ENCODE measurements at regions of chr6 and their contacts with region 1.

Region 1: DNA sequence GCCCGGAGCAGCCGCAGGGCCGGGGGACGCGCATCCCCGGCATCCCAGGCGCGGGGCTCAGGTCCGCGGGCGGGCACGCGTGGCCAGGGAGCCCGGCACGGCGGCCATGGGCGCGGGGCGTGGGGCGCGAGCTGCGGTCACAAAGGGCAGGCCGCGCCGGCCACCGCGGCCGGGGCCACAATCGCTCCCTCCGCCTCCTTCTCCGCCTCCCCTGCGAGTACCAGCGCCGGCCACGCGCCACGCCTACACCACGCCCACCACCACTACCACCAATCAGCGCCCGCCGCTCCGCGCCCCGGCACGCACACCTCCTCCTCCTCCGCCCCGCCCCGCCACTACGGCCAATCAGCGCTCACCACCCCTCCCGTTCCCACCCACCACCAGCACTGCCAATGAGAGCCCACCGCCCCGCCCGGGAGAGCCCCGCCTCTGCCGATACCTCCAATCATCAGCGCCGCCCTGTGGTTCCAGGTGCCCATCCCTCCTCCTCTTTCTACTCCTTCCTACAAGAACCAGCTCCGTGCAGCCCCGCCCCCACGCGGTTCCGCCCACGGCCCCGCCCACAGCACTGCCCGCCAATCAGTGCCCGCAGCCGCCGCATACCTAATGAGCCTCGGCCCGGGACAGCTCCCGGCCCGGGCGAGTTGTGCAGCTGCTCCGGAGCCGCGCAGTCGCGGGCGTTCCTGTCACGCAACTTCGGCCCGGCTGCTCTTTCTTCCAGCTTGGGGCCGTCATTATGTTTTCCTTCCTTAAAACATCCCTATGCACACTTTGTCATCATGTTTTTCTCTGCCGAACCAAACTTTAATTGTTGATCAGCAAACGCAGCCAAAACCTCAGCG is at the start of gene RPS6KA2:
- DNase-seq: peak; percentile 99 to 100 (median 100)
- H3K4me3 ChIP-seq: peak within 1 kb of the TSS; percentile 55 to 79 (median 62)
- H3K4me3 Mint-ChIP-seq: peak within 1 kb of the TSS; percentile 91 to 93
- H3K27ac ChIP-seq: peak within 1 kb of the TSS; percentile 52 to 81
- H3K27ac Mint-ChIP-seq: peak within 1 kb of the TSS; percentile 73 to 93 (median 86)
- H3K4me1 ChIP-seq: peaks cover 21 to 29% of the 10 kb centered on the region in 2 donors
- H3K4me1 Mint-ChIP-seq: peaks cover 25% of the 10 kb centered on the region
- H3K27me3 ChIP-seq: peaks cover 27 to 36% of the 10 kb centered on the region in 2 donors
- H3K27me3 Mint-ChIP-seq: peaks cover 42 to 48% (median 48%) of the 10 kb centered on the region in 3 donors
- CTCF ChIP-seq: no peak
- polyA plus RNA-seq, gene RPS6KA2: 1.4 to 3.1 (median 1.9) TPM

Region 2: DNA sequence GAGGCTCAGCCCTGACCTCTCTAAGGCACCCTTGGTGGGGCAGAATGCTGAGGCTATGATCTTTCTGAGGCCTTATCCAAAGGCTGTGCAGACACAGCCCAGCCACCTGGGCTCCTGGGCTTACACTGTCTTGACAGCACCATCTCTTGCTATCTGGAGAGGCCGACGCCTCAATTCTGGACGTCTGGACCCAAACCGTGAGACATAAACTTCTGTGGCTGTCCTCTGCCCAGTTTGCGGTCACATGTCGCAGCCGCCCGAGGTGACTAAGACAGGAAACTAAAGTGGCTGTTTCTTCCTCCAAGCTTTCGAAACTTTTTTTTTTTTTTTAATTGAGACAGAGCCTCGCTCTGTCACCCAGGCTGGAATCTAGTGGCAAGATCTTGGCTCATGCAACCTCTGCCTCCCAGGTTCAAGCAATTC is 368.4 kb before region 1 on chr6:
- intact Hi-C with region 1: loop called (anchors 10 kb)
- DNase-seq: peak; percentile 94 to 97 (median 95)
- H3K4me3 ChIP-seq: peak overlapping the region in 1 of 3 experiments; percentile 49
- H3K4me3 Mint-ChIP-seq: peak overlapping the region; percentile 66 to 80
- H3K27ac ChIP-seq: peak overlapping the region; percentile 95 to 99
- H3K27ac Mint-ChIP-seq: peak overlapping the region; percentile 99 to 100 (median 99)
- H3K4me1 ChIP-seq: peaks cover 39 to 47% of the 10 kb centered on the region in 2 donors
- H3K4me1 Mint-ChIP-seq: peaks cover 58% of the 10 kb centered on the region
- H3K27me3 ChIP-seq: no peaks in the 10 kb centered on the region
- H3K27me3 Mint-ChIP-seq: peaks cover 8 to 15% (median 10%) of the 10 kb centered on the region in 3 donors
- CTCF ChIP-seq: no peak

Region 3: DNA sequence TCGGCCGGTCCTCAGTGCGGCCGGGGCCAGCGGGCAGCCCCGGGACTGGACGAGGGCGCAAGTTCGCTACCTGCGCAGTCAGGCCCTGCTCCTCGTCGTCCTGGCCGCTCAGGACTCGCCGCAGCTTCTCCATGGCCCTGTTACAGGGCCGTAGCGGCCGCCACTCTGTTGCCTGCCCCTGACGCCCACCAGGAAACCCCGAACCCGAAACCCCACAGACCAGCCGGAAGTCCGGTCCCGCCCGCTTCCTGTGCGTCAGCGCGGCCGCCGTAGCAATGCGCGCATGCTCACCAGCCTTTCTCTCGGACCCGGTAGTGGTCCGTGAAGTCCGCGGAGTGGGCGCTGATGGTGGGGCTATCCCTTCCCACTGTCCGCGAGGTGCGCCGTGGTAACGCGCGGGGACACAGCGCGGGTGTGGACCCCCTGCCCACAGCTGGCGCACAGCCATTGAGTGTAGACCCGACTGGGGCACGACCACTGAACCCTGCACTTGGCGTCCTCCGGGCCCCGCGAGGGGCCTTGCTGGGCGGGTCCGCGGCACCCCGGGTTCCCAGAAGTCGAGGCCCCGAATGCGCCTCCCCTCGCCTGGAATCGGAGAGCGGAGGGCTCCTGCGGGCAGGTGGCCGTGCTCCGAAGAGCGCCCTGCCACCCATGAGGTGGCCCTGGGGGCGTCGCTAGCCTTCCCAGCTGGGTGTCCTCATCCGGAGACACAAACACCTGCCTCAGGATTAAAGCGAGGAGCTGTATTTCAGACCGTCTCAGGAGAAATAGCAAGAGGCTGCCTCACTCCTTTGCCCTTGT is 284.7 kb before region 1 on chr6 and contains the start of gene SFT2D1:
- intact Hi-C with region 1: loop called in 1 of 2 experiments (anchors 5 kb)
- DNase-seq: peak; percentile 90 to 95 (median 92)
- H3K4me3 ChIP-seq: peak within 1 kb of the TSS; percentile 67 to 97 (median 88)
- H3K4me3 Mint-ChIP-seq: peak within 1 kb of the TSS; percentile 93 to 98
- H3K27ac ChIP-seq: peak within 1 kb of the TSS; percentile 94 to 100
- H3K27ac Mint-ChIP-seq: peak within 1 kb of the TSS; percentile 96 to 98 (median 97)
- H3K4me1 ChIP-seq: peaks cover 36 to 40% of the 10 kb centered on the region in 2 donors
- H3K4me1 Mint-ChIP-seq: peaks cover 22% of the 10 kb centered on the region
- H3K27me3 ChIP-seq: no peaks in the 10 kb centered on the region
- H3K27me3 Mint-ChIP-seq: peaks cover 0 to 1% (median 0%) of the 10 kb centered on the region in 3 donors
- CTCF ChIP-seq: no peak
- polyA plus RNA-seq, gene SFT2D1: 48.1 to 166 (median 140) TPM

Region 4: DNA sequence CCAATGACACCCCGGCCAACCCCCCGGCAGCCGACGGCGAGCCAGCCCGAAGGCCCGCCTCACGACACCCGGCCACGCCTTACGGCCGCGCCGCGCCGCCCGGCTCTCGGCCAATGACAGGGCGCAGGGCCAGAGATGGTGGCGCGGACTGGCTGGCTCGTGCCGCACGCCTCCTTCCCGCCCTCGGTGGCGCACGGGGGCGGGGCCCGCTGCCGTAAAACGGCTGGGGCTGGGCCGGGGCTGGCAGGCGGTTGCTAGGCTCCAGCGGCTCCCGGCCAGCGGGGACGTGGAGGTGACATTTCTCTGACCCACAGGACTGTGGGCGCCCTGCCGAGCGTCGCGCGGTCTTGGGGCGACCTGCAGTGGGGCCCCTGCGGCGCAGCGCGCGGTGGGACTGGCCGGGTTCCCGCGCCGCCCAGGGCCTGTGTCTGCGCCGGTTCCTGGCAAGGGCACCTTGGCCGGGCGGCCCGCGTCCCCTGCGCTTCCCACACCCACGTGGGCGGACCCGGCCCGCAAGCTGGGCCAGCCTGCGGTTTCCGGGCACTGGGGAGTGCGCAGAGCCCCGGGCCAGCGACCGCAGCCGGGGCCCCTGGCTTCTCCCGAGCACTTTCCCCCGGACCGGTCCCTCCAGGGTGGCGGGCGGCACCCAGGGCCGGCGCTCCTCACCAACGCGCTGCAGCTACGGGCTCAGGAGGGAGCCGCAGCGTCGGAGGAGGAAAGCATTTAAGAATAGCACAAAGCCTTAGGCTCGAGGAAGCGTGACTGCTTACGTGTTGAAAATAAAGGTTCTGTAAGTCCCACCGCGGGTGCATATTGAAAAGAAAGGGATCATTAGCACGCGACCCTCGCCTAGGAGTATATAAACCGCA is 244.1 kb before region 1 on chr6 and contains the start of gene MPC1:
- intact Hi-C with region 1: loop called (anchors 5 to 10 kb)
- DNase-seq: peak; percentile 91 to 93 (median 92)
- H3K4me3 ChIP-seq: peak within 1 kb of the TSS; percentile 89 to 97 (median 92)
- H3K4me3 Mint-ChIP-seq: peak within 1 kb of the TSS; percentile 94 to 95
- H3K27ac ChIP-seq: peak within 1 kb of the TSS; percentile 81 to 86
- H3K27ac Mint-ChIP-seq: peak within 1 kb of the TSS; percentile 88 to 95 (median 90)
- H3K4me1 ChIP-seq: peaks cover 14 to 25% of the 10 kb centered on the region in 2 donors
- H3K4me1 Mint-ChIP-seq: peaks cover 23% of the 10 kb centered on the region
- H3K27me3 ChIP-seq: no peaks in the 10 kb centered on the region
- H3K27me3 Mint-ChIP-seq: no peaks in the 10 kb centered on the region
- CTCF ChIP-seq: peak; percentile 44
- polyA plus RNA-seq, gene MPC1: 52.4 to 122 (median 104) TPM

Region 5: GRCh38 chr6:166956444-166957086 is 329.3 kb after region 1 on chr6 and contains the start of gene RNASET2:
- intact Hi-C with region 1: loop called (anchors 5 to 10 kb)
- DNase-seq: peak; percentile 88 to 93 (median 91)
- H3K4me3 ChIP-seq: peak within 1 kb of the TSS; percentile 85 to 97 (median 95)
- H3K4me3 Mint-ChIP-seq: peak within 1 kb of the TSS; percentile 93 to 97
- H3K27ac ChIP-seq: peak within 1 kb of the TSS; percentile 99 to 100
- H3K27ac Mint-ChIP-seq: peak within 1 kb of the TSS; percentile 98 to 100 (median 100)
- H3K4me1 ChIP-seq: peaks cover 70 to 80% of the 10 kb centered on the region in 2 donors
- H3K4me1 Mint-ChIP-seq: peaks cover 69% of the 10 kb centered on the region
- H3K27me3 ChIP-seq: no peaks in the 10 kb centered on the region
- H3K27me3 Mint-ChIP-seq: peaks cover 0 to 8% (median 3%) of the 10 kb centered on the region in 3 donors
- CTCF ChIP-seq: no peak
- polyA plus RNA-seq, gene RNASET2: 432 to 562 (median 493) TPM

Region 6: GRCh38 chr6:166999145-166999883 is 372.1 kb after region 1 on chr6 and contains the start of gene CEP43:
- intact Hi-C with region 1: loop called in 1 of 2 experiments (anchors 5 kb)
- DNase-seq: peak; percentile 93 to 95 (median 94)
- H3K4me3 ChIP-seq: peak within 1 kb of the TSS; percentile 76 to 99 (median 98)
- H3K4me3 Mint-ChIP-seq: peak within 1 kb of the TSS; percentile 84 to 92
- H3K27ac ChIP-seq: peak within 1 kb of the TSS; percentile 67 to 80
- H3K27ac Mint-ChIP-seq: peak within 1 kb of the TSS; percentile 69 to 87 (median 84)
- H3K4me1 ChIP-seq: peaks cover 20 to 21% of the 10 kb centered on the region in 2 donors
- H3K4me1 Mint-ChIP-seq: peaks cover 28% of the 10 kb centered on the region
- H3K27me3 ChIP-seq: no peaks in the 10 kb centered on the region
- H3K27me3 Mint-ChIP-seq: no peaks in the 10 kb centered on the region
- CTCF ChIP-seq: no peak
- polyA plus RNA-seq, gene CEP43: 3.8 to 7.1 (median 6.4) TPM

Measured in CD14-positive monocyte (primary cell).